Left colon (tissue), 2 donors: ENCODE measurements at regions of chr9 and their contacts with region 1.

Region 1: GRCh38 chr9:21326526-21327139 is 8.6 kb downstream of the KLHL9 start:
- DNase-seq: no peak
- ATAC-seq: peak; percentile 77

Region 2: DNA sequence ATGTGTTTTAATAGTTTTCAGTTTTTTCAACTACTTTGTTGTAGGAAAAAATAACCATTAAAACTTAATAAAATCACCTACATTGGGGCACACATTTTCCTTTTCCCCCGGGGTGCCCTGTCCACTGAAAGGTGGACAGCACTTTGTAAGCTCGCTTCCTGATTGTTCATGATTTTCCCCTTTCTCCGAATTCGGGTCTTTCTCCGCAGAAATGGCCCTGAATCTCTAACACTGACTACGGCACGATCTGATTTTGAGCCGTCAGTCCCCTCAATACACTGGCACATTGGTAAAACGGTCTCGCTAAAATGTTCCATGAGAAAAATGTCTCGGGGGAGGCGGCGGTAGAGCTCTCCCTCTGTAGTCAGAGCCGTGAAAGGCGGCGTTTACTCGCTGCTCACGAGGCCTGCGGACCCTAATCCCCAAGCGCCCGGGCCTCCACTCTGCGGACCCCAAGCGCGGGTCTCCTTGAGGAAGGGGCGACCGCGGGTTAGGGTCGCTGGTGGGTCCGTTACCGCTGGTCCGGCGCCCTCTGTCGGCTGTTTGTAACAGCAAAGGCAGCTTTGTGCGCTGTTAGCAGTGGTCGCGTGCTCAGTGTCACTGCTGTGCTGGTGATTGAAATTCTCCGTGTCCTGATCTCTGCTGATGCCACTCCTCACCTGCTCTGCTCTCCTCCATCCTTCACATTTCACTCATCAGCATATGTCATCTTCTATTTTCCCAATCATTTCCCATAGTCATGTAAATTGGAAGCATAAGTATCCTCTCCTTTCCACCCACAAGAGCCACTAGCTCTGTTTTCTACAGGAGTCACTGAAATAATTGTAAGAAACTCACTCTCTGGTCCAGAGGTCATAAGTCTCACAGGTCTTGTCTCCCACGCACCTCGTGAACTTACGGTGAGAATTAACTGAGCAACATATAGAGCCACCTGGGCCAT is 69.4 kb after region 1 on chr9:
- intact Hi-C with region 1: loop called in 1 of 2 experiments (anchors 2 kb)
- DNase-seq: peak in 1 of 2 donors; percentile 68
- ATAC-seq: peak; percentile 62

Region 3: DNA sequence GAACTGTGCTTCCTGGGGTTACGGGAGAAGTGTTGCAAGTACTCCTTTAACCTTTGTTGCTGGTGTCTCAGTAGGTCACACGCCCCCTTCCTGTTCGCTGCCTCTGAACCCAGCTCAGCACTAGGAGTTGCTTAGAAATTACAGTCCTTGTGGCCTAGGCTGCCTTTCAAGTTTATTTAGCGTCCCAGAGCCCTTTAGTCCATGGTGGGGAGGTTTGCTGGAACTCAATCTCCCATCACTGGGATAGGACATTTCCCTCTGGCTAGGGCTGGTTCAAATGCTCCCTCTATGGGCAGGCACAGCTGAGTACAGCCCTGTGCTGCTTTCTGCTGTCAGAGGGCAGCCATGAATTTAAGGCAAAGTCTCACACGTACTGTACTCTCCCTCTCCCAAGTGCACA is 87.0 kb after region 1 on chr9:
- intact Hi-C with region 1: no loop called
- DNase-seq: no peak
- ATAC-seq: peak; percentile 64

Region 4: GRCh38 chr9:21455320-21455719 is 128.7 kb after region 1 on chr9:
- intact Hi-C with region 1: loop called in 1 of 2 experiments (anchors 10 kb)
- DNase-seq: no peak
- ATAC-seq: peak; percentile 76